ENCODE measurements at regions of chr14 and their contacts with region 1.

Region 1: DNA sequence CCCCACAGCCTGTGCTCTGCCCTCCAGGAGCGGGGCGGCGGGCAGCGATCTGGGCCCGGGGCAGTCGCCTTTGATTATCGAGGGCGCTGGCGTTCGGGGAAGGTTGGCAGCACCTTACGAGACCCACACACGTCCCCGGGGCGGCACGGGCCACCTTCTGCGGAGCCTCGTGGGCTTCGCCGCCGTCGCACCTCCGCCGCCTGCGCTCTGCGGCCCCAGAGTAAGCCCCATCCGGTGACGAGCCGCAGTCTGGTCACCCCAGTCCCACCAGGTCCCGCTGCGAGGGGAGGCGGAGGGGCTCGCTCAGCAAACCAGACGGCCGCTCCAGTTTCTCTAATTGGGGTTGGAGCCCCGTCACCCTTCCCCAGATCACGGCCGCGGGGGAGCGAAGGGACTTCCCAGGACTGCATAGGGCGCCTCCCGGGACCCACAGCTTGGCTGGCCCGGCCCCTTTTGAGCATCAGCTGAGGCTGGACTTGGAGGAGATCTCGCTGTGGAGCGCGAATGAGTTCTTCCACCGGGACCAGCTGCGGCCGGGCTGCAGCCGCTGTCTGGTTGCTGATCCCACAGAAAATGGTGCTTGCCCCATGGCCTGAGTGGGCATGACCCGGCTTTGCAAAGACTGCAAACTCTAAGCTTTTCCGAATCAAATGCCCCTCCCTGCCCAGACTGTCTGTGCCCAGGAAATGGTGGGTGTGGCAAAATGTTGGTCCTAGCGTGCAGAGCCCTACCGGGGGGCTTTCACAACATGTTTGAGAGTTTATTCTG is 560 bp downstream of the LGALS3 start:
- DNase-seq: peak; percentile 40 to 77 (median 47)
- H3K4me3 ChIP-seq: peak overlapping the region; percentile 1 to 43
- H3K4me3 Mint-ChIP-seq: peak overlapping the region; percentile 78 to 85 (median 82)
- H3K27ac ChIP-seq: peak overlapping the region; percentile 53
- H3K27ac Mint-ChIP-seq: peak overlapping the region; percentile 37 to 86 (median 61)
- H3K4me1 ChIP-seq: peaks cover 38% of the 10 kb centered on the region
- H3K4me1 Mint-ChIP-seq: peaks cover 22 to 48% (median 30%) of the 10 kb centered on the region in 4 donors
- H3K27me3 ChIP-seq: no peaks in the 10 kb centered on the region
- H3K27me3 Mint-ChIP-seq: peaks cover 0 to 1% of the 10 kb centered on the region in 2 donors

Region 2: GRCh38 chr14:54829455-54830224 is 300.0 kb before region 1 on chr14:
- CTCF ChIA-PET with region 1: no interaction called
- POLR2A ChIA-PET with region 1: no interaction called
- intact Hi-C with region 1: no loop called
- DNase-seq: no peak
- H3K4me3 ChIP-seq: no peak overlapping the region
- H3K4me3 Mint-ChIP-seq: no peak overlapping the region
- H3K27ac ChIP-seq: no peak overlapping the region
- H3K27ac Mint-ChIP-seq: no peak overlapping the region
- H3K4me1 ChIP-seq: no peaks in the 10 kb centered on the region
- H3K4me1 Mint-ChIP-seq: no peaks in the 10 kb centered on the region
- H3K27me3 ChIP-seq: no peaks in the 10 kb centered on the region
- H3K27me3 Mint-ChIP-seq: no peaks in the 10 kb centered on the region

Region 3: GRCh38 chr14:55085060-55085660 is 44.5 kb before region 1 on chr14:
- CTCF ChIA-PET with region 1: interaction called, 12 read pairs
- POLR2A ChIA-PET with region 1: no interaction called
- intact Hi-C with region 1: loop called (anchors 5 kb)
- DNase-seq: no peak
- H3K4me3 ChIP-seq: no peak overlapping the region
- H3K4me3 Mint-ChIP-seq: no peak overlapping the region
- H3K27ac ChIP-seq: no peak overlapping the region
- H3K27ac Mint-ChIP-seq: no peak overlapping the region
- H3K4me1 ChIP-seq: peaks cover 3% of the 10 kb centered on the region
- H3K4me1 Mint-ChIP-seq: peaks cover 3% of the 10 kb centered on the region in 4 donors
- H3K27me3 ChIP-seq: no peaks in the 10 kb centered on the region
- H3K27me3 Mint-ChIP-seq: no peaks in the 10 kb centered on the region

Region 4: GRCh38 chr14:55094321-55095157 is 35.1 kb before region 1 on chr14:
- CTCF ChIA-PET with region 1: interaction called, 12 read pairs
- POLR2A ChIA-PET with region 1: interaction called, 5 read pairs
- intact Hi-C with region 1: loop called (anchors 5 kb)
- DNase-seq: no peak
- H3K4me3 ChIP-seq: no peak overlapping the region
- H3K4me3 Mint-ChIP-seq: no peak overlapping the region
- H3K27ac ChIP-seq: no peak overlapping the region
- H3K27ac Mint-ChIP-seq: no peak overlapping the region
- H3K4me1 ChIP-seq: peaks cover 21% of the 10 kb centered on the region
- H3K4me1 Mint-ChIP-seq: peaks cover 19 to 23% (median 20%) of the 10 kb centered on the region in 4 donors
- H3K27me3 ChIP-seq: no peaks in the 10 kb centered on the region
- H3K27me3 Mint-ChIP-seq: no peaks in the 10 kb centered on the region

Region 5: GRCh38 chr14:55102141-55102621 is 27.4 kb before region 1 on chr14:
- CTCF ChIA-PET with region 1: interaction called, 14 read pairs
- POLR2A ChIA-PET with region 1: interaction called, 38 read pairs
- intact Hi-C with region 1: loop called (anchors 1 kb)
- DNase-seq: peak; percentile 53 to 77 (median 55)
- H3K4me3 ChIP-seq: peak overlapping the region in 1 of 2 donors; percentile 26
- H3K4me3 Mint-ChIP-seq: peak overlapping the region in 7 of 8 donors; percentile 18 to 85 (median 67)
- H3K27ac ChIP-seq: peak overlapping the region; percentile 65
- H3K27ac Mint-ChIP-seq: peak overlapping the region; percentile 94 to 98 (median 97)
- H3K4me1 ChIP-seq: peaks cover 72% of the 10 kb centered on the region
- H3K4me1 Mint-ChIP-seq: peaks cover 41 to 72% (median 53%) of the 10 kb centered on the region in 4 donors
- H3K27me3 ChIP-seq: no peaks in the 10 kb centered on the region
- H3K27me3 Mint-ChIP-seq: no peaks in the 10 kb centered on the region

Region 6: GRCh38 chr14:55107766-55108554 is 21.7 kb before region 1 on chr14:
- CTCF ChIA-PET with region 1: interaction called, 14 read pairs
- POLR2A ChIA-PET with region 1: interaction called, 38 read pairs
- intact Hi-C with region 1: loop called (anchors 1 kb)
- DNase-seq: peak; percentile 19 to 68 (median 27)
- H3K4me3 ChIP-seq: no peak overlapping the region
- H3K4me3 Mint-ChIP-seq: peak overlapping the region; percentile 1 to 71 (median 34)
- H3K27ac ChIP-seq: peak overlapping the region; percentile 33
- H3K27ac Mint-ChIP-seq: peak overlapping the region; percentile 86 to 95 (median 92)
- H3K4me1 ChIP-seq: peaks cover 38% of the 10 kb centered on the region
- H3K4me1 Mint-ChIP-seq: peaks cover 23 to 50% (median 32%) of the 10 kb centered on the region in 4 donors
- H3K27me3 ChIP-seq: no peaks in the 10 kb centered on the region
- H3K27me3 Mint-ChIP-seq: no peaks in the 10 kb centered on the region

Region 7: DNA sequence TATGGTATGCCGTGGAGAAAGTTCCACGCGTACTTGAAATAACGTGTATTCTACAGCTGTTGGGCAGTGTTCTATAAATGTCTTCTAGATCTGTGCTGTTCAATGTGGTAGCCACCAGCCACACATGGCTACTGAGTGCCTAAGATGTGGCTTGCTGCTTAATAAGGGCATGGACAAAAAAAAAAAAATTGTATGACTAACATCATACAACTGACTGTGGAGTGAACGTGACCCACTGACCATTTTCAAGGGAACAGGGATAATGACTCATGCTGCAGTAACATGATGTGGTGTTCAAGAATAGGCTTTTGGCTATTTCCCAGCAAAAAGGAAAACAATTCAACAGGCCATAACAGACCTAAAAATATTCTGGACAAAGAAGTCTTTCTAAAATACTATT is 269.1 kb after region 1 on chr14:
- CTCF ChIA-PET with region 1: no interaction called
- POLR2A ChIA-PET with region 1: no interaction called
- intact Hi-C with region 1: no loop called
- DNase-seq: no peak
- H3K4me3 ChIP-seq: no peak overlapping the region
- H3K4me3 Mint-ChIP-seq: no peak overlapping the region
- H3K27ac ChIP-seq: no peak overlapping the region
- H3K27ac Mint-ChIP-seq: no peak overlapping the region
- H3K4me1 ChIP-seq: peaks cover 8% of the 10 kb centered on the region
- H3K4me1 Mint-ChIP-seq: peaks cover 10 to 22% (median 17%) of the 10 kb centered on the region in 4 donors
- H3K27me3 ChIP-seq: no peaks in the 10 kb centered on the region
- H3K27me3 Mint-ChIP-seq: no peaks in the 10 kb centered on the region